Dorsolateral prefrontal cortex (tissue), 120 donors: ENCODE measurements at regions of chr14 and their contacts with region 1.

Region 1: GRCh38 chr14:96501742-96502617 is at the start of gene PAPOLA:
- DNase-seq: peak; percentile 89 to 97 (median 94)
- H3K4me3 ChIP-seq: peak within 1 kb of the TSS; percentile 69 to 100 (median 95)
- H3K27ac ChIP-seq: peak within 1 kb of the TSS; percentile 75 to 100 (median 98)
- H3K27me3 ChIP-seq: no peaks in the 10 kb centered on the region
- CTCF ChIP-seq: peak in 47 of 56 donors; percentile 4 to 67 (median 39)
- total RNA-seq, gene PAPOLA: 127 to 355 (median 176) TPM

Region 2: DNA sequence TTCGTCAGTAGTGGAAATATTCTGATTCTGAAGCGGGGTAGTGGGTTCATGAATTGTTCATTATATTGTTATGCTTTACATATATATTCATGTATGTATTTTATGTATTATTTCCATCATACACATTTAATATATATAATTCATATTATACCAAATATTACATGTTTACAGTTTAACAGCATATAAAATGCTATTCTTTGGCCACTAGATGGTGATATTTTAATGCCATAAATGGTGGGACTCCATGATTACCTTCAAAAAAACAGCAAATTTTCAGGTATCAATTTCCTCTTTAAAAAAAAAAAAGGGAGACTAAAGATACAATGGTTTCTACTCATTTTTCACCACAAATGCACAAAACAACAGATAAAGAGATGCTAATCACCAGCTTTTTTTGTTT is 205.0 kb before region 1 on chr14:
- intact Hi-C with region 1: loop called in 1 of 2 experiments (anchors 10 kb)
- DNase-seq: no peak
- H3K4me3 ChIP-seq: no peak overlapping the region
- H3K27ac ChIP-seq: no peak overlapping the region
- H3K27me3 ChIP-seq: no peaks in the 10 kb centered on the region
- CTCF ChIP-seq: peak; percentile 51 to 85 (median 67)

Region 3: DNA sequence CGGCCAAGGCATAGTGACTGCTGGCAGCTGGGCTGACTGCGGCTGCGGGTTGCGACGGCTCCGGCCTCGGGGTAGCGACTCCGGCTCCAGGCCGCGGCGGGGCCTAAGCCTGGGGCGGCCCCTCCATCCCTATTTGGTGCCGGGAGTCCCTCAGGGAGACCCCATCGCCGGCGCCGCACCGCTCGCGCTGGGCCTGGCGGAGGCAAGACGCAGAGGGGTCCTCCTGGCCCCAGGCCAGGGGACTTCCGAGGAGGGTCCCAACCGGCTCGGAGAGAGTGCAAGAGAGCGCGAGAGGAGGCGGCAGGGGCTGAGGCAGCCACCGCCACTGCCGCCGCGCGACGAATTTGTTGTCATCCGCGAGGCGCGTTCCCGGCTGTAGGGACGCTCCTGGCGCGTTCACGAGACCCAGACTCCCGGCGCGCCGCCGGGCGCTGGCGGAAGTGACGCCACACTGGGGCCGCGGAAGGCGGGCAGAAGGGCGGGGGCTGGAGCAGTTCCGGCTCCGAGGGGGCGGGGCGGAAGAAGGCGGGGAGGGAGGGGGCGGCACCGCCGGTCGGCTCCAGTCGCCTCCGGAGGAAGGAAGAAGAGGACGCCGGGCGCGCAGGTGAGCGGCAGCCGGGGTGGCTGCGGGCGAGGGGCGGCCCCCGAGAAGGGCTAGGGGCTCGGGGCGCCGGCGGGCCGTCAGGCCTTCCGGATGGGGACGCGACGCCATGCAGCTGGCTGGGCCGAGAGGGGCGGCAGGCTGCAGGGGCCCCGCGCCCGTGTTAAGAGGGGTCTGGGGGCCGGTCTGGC is 138.8 kb before region 1 on chr14 and contains the starts of genes ATG2B and GSKIP:
- intact Hi-C with region 1: loop called in 1 of 2 experiments (anchors 2 kb)
- DNase-seq: peak; percentile 88 to 97 (median 94)
- H3K4me3 ChIP-seq: peak within 1 kb of the TSS; percentile 83 to 100 (median 98)
- H3K27ac ChIP-seq: peak within 1 kb of the TSS; percentile 66 to 98 (median 92)
- H3K27me3 ChIP-seq: no peaks in the 10 kb centered on the region
- CTCF ChIP-seq: peak in 18 of 56 donors; percentile 7 to 48 (median 23)
- total RNA-seq, gene ATG2B: 35.1 to 92.2 (median 66.5) TPM
- total RNA-seq, gene GSKIP: 14.6 to 47.7 (median 30.5) TPM

Region 4: GRCh38 chr14:96391293-96392118 is 110.5 kb before region 1 on chr14:
- intact Hi-C with region 1: loop called in 1 of 2 experiments (anchors 10 kb)
- DNase-seq: peak; percentile 90 to 99 (median 94)
- H3K4me3 ChIP-seq: peak overlapping the region; percentile 45 to 93 (median 79)
- H3K27ac ChIP-seq: peak overlapping the region in 58 of 59 donors; percentile 9 to 93 (median 86)
- H3K27me3 ChIP-seq: no peaks in the 10 kb centered on the region
- CTCF ChIP-seq: peak in 21 of 56 donors; percentile 6 to 40 (median 18)

Region 5: GRCh38 chr14:96409701-96410100 is 92.3 kb before region 1 on chr14:
- intact Hi-C with region 1: no loop called
- DNase-seq: no peak
- H3K4me3 ChIP-seq: no peak overlapping the region
- H3K27ac ChIP-seq: no peak overlapping the region
- H3K27me3 ChIP-seq: no peaks in the 10 kb centered on the region
- CTCF ChIP-seq: no peak

Region 6: DNA sequence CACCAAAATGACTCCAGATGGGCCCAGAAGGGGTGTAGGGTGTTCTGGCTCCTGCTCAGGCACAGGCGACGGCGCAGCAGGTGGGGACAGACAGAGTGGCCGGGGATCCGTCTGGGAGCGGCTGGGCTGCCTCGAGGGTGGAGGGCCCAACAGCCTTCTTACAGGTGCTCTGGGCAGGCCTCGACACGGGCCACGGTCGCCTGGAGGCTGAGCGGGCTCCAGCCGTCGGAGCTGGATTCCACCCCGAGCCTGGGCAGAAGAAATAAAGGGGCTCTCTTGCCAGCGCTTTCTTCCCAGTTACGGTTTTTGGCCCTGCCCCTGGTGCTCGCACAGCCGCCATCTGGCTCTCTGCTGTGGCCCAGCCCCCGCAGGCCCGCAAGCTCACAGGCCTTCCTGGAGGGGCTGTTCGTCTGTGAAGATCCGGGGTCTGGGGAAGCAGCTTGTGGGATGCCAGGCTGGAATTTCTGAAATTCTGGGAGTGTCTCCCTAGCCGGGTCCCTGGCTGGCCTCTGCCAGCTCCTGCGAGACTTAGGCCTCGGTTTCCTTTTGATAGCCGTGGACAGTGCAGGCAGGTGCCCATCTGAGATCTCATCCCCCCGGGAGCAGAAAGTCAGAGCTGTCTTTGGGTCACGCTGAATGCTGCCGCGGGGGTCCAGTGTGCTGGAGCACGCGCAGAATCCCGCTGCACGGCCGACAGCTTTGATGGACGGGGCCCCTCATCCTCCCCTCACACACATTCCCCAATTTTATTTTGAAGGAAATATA is 122.9 kb after region 1 on chr14:
- intact Hi-C with region 1: no loop called
- DNase-seq: peak in 1 of 10 donors; percentile 56
- H3K4me3 ChIP-seq: no peak overlapping the region
- H3K27ac ChIP-seq: no peak overlapping the region
- H3K27me3 ChIP-seq: peaks cover 0 to 37% (median 11%) of the 10 kb centered on the region in 45 donors
- CTCF ChIP-seq: no peak

Region 7: DNA sequence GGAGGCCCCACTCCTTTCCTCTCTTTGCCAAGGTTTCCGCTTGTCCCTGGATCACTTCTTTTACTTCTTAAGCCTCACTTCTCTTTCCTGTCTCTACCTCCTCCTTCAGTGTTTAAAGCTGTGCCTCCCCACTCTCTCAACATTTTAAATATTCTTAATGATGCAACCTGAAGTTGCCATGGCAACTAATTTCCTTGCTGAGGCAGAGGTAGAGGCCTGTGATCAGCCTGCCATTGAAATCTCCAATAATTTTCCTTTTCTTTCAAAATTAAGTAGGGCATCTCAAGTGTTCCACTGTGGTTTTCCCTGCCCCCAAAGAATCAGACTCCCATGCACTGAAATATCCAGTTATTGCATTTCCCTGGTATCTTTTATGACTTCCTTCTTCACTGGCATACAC is 186.6 kb after region 1 on chr14:
- intact Hi-C with region 1: no loop called
- DNase-seq: no peak
- H3K4me3 ChIP-seq: no peak overlapping the region
- H3K27ac ChIP-seq: no peak overlapping the region
- H3K27me3 ChIP-seq: peaks cover 0 to 10% (median 0%) of the 10 kb centered on the region in 45 donors
- CTCF ChIP-seq: no peak

Region 8: DNA sequence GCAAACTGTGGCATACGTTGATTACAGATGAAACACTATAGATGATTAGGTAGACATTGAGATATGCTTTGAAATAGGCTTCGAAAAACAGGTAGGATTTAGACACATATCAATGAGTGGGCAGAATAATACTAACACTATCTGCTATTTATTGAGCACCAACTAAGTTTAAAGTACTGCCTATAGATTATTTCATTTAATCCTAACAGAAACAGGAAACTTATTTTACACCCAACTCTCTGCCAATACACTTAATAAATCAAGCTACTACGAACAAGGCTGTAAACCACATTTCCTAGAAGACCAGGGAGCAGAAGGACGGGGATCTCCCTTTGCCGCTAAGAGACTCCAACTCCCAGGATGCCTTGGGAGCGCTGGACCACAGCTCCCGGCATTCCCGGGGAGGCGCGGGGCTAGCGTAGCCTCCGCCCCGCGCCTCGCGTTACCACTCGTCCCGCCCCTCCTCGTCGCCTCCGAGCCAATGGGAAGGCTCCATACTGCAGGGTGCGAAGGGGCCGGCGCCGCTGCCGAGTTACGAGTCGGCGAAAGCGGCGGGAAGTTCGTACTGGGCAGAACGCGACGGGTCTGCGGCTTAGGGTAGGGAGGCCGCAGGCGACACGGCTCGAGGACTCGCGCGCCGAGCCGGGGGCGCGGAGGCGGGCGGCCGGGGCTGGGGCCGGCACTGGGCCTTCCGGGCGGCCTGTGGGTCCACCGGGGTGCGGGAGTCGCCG is 295.0 kb after region 1 on chr14 and contains the start of gene VRK1:
- intact Hi-C with region 1: loop called in 1 of 2 experiments (anchors 5 kb)
- DNase-seq: peak; percentile 95 to 99 (median 97)
- H3K4me3 ChIP-seq: peak within 1 kb of the TSS; percentile 64 to 93 (median 80)
- H3K27ac ChIP-seq: peak within 1 kb of the TSS in 15 of 59 donors; percentile 11 to 77 (median 51)
- H3K27me3 ChIP-seq: no peaks in the 10 kb centered on the region
- CTCF ChIP-seq: peak in 30 of 56 donors; percentile 7 to 59 (median 32)
- total RNA-seq, gene VRK1: 12.5 to 31.3 (median 20.6) TPM